Aorta (tissue), 5 donors: ENCODE measurements at regions of chr11 and their contacts with region 1.

Region 1: DNA sequence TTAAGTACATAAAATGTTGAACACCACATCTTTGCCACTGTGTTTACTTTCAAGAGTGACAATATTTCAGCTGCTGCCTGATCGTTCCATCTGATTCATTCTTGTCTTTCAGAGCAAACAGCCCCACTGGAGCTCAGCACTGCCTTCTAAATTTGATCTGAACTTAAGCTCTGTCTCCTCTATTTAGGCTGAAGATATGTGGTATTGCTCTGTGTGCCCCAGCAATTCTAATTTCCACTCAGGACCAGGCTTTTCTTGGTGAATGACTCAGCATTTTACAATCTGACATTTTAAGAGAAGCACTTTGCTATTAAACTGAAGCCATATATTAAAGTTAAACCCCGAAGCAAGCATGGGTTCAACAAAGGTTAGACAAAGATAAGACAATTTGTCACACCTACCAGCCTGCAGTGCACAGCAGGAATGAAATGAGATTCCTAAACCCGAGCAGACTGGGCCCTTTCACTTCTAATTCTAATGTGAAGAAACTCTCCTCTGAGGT is 41.6 kb upstream of the PLET1 start:
- DNase-seq: no peak
- ATAC-seq: no peak
- H3K4me3 ChIP-seq: no peak overlapping the region
- H3K27ac ChIP-seq: no peak overlapping the region
- H3K4me1 ChIP-seq: no peaks in the 10 kb centered on the region
- H3K27me3 ChIP-seq: no peaks in the 10 kb centered on the region

Region 2: DNA sequence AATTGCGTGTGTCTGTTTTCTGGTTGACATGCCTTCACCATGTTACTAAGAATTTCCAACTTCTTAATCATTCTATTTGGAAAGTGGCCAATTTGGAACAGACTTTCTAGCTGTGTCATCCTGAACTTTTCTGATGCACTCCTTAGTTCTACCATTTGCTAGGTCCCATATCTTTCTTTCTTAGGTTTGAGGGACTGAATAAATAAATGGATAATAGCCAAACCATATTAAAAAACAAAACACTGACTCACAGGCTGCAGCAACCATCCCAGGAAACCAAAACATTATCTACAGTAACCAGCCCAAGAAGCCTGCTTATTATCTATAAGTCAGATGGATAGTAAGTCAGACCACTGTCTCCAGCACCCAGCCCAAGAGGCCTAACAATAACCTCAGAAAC is 15.9 kb after region 1 on chr11:
- intact Hi-C with region 1: loop called in 1 of 2 experiments (anchors 2 kb)
- DNase-seq: no peak
- ATAC-seq: no peak
- H3K4me3 ChIP-seq: no peak overlapping the region
- H3K27ac ChIP-seq: peak overlapping the region in 1 of 2 donors; percentile 65
- H3K4me1 ChIP-seq: peaks cover 3 to 4% of the 10 kb centered on the region in 2 donors
- H3K27me3 ChIP-seq: no peaks in the 10 kb centered on the region